Left cardiac atrium (tissue), 4 donors: ENCODE measurements at regions of chr16 and their contacts with region 1.

Region 1: GRCh38 chr16:83826146-83826913 is 18.6 kb downstream of the HSBP1 start:
- DNase-seq: peak; percentile 86
- ATAC-seq: peak; percentile 94 to 96

Region 2: GRCh38 chr16:83878838-83879237 is 52.5 kb after region 1 on chr16:
- intact Hi-C with region 1: loop called (anchors 2 to 5 kb)
- DNase-seq: no peak
- ATAC-seq: no peak

Region 3: DNA sequence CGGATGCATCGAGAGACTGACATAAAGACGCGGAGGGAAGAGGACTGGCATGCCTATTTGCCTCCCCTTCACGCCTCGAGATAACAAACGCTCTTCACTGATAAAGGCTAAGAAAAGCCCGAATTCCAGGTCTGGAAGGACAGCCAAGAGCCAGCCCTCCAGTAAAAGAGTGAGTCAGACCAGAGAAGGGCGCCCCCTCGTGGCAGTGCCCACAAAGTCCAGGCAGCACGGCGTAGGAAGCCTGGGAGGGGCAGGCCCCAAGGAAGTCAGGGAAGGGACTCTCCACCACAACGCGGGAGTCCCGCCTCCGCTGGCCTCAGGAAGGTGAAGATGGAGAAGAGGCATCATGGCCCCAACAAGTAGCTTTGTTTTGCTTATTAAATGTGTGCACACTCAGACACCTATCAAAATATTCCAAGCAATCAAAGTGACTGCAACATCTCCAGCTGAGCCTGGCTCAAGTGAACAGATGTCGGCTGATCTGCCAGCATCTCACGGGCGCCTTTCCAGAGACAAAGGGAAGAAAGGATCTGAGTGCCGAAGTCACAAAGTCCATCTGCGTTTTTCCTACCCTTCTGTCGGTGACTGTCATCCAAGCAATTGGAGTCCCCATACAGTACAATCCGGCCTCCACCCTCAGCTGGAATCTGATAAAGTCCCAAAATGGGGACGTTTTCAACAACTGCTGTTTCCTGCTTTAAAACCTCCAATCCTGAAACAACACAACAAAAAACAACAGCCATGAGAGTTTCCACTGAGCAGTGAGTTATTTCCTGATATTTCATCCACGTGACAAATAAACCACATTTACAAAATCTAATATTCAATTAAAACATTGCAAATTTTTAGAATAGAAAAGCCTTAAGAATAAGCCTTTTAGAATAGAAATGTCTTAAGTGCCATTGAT is 236.7 kb after region 1 on chr16:
- intact Hi-C with region 1: loop called in 1 of 2 experiments (anchors 10 kb)
- DNase-seq: peak; percentile 85
- ATAC-seq: peak; percentile 92